ENCODE measurements at regions of chr19 and their contacts with region 1.

Region 1: DNA sequence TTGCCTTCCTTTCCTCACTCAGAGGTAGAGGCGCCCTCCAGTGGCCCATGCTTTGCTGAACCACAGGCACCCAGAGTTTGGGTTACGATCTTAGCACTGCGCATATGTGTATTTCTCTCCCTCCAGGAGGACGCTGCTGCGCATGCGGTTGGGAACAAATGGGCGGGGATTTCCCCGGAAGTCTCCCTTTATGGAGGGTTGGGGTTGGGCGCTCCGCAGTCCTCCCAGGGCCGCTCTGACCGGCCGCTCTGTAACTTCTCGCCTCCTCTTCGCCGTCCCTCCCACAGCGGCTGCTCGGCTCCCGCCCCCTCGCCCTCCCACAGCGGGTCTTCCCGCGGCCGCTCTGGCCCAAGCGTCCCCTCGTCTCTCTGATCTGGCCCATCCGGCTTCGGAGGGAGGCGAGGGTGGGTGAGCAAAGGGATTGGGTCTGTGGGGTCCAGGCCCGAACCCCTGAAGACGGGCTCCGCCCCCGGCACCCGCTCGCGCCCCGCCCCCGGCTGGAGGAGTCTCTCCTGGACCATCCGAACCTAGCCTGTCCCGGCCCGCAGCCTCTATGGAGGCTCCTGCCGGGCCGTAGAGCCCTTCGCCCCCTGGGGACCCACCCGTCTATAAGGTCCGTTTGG is at the start of gene MEGF8:
- DNase-seq: peak; percentile 97 to 99 (median 98)
- ATAC-seq: peak; percentile 97 to 99 (median 98)
- H3K4me3 ChIP-seq: peak within 1 kb of the TSS; percentile 68 to 98 (median 88)
- H3K27ac ChIP-seq: peak within 1 kb of the TSS; percentile 29 to 88 (median 81)
- H3K4me1 ChIP-seq: peaks cover 2 to 53% (median 25%) of the 10 kb centered on the region in 12 donors
- H3K27me3 ChIP-seq: peaks cover 10 to 25% (median 21%) of the 10 kb centered on the region in 9 donors
- CTCF ChIP-seq: peak; percentile 76 to 97 (median 84)
- POLR2A ChIP-seq: peak; percentile 4 to 85
- total RNA-seq, gene MEGF8: 26.5 to 50.4 (median 36.6) TPM

Region 2: GRCh38 chr19:42279572-42280191 is 45.7 kb before region 1 on chr19:
- intact Hi-C with region 1: no loop called
- DNase-seq: peak in 4 of 5 donors; percentile 65 to 88 (median 72)
- ATAC-seq: peak in 1 of 4 donors; percentile 17
- H3K4me3 ChIP-seq: peak overlapping the region; percentile 51 to 97 (median 78)
- H3K27ac ChIP-seq: peak overlapping the region; percentile 95 to 100 (median 96)
- H3K4me1 ChIP-seq: peaks cover 22 to 89% (median 77%) of the 10 kb centered on the region in 12 donors
- H3K27me3 ChIP-seq: no peaks in the 10 kb centered on the region
- CTCF ChIP-seq: peak; percentile 82 to 98 (median 92)
- POLR2A ChIP-seq: no peak

Region 3: GRCh38 chr19:42401365-42402303 is 76.2 kb after region 1 on chr19:
- intact Hi-C with region 1: loop called in 1 of 10 experiments (anchors 5 kb)
- DNase-seq: peak; percentile 75 to 87 (median 81)
- ATAC-seq: peak; percentile 11 to 66 (median 60)
- H3K4me3 ChIP-seq: peak overlapping the region; percentile 16 to 87 (median 64)
- H3K27ac ChIP-seq: peak overlapping the region; percentile 7 to 81 (median 69)
- H3K4me1 ChIP-seq: peaks cover 6 to 33% (median 16%) of the 10 kb centered on the region in 12 donors
- H3K27me3 ChIP-seq: no peaks in the 10 kb centered on the region
- CTCF ChIP-seq: peak; percentile 70 to 89 (median 82)
- POLR2A ChIP-seq: no peak

Region 4: DNA sequence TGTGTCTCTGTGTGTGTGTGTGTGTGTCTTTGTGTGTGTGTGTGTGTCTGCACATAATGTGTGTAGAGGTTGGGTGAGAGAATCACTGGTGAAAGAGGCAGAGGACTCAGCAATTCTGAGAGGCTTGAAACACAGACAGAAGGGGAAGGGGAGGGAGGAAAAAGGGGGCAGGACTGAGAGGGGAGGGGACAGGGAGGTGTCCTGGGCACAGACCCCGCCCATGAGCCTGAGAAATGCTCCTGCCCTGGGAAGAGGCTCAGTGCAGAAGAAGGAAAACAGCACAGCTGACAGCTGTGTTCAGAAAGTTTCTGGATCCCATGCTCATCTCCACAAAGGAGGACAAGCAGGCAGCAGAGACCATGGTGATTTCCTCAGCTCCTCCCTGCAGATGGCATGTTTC is 328.5 kb after region 1 on chr19:
- intact Hi-C with region 1: no loop called
- DNase-seq: no peak
- ATAC-seq: no peak
- H3K4me3 ChIP-seq: no peak overlapping the region
- H3K27ac ChIP-seq: no peak overlapping the region
- H3K4me1 ChIP-seq: peaks cover 0 to 6% (median 0%) of the 10 kb centered on the region in 12 donors
- H3K27me3 ChIP-seq: no peaks in the 10 kb centered on the region
- CTCF ChIP-seq: no peak
- POLR2A ChIP-seq: no peak